ENCODE measurements at regions of chr1 and their contacts with region 1.

Region 1: DNA sequence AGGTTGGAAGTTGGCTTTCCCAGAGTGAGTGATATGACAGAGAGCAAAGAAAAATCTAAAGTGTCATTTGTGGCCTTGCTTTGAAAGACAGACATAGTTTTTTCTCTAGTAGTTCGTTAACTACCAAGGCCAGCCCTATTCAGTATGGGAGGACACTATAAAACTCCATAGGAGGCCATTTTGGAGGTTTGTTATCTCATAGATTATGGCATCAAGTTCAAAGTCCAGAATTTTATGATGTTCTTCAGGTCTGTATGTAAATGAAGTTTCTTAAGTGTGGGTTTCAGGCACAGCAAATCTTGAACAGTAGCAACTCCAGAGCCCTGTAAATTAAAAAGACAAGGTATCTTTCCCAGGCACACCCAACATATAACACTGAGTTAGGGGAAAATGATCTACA is 437.1 kb downstream of the PLPP3 start:
- DNase-seq: no peak
- ATAC-seq: no peak
- H3K4me3 ChIP-seq: no peak overlapping the region
- H3K27ac ChIP-seq: no peak overlapping the region
- H3K4me1 ChIP-seq: no peaks in the 10 kb centered on the region
- H3K27me3 ChIP-seq: no peaks in the 10 kb centered on the region
- CTCF ChIP-seq: no peak
- EP300 ChIP-seq: no peak
- POLR2A ChIP-seq: no peak
- RAD21 ChIP-seq: no peak

Region 2: DNA sequence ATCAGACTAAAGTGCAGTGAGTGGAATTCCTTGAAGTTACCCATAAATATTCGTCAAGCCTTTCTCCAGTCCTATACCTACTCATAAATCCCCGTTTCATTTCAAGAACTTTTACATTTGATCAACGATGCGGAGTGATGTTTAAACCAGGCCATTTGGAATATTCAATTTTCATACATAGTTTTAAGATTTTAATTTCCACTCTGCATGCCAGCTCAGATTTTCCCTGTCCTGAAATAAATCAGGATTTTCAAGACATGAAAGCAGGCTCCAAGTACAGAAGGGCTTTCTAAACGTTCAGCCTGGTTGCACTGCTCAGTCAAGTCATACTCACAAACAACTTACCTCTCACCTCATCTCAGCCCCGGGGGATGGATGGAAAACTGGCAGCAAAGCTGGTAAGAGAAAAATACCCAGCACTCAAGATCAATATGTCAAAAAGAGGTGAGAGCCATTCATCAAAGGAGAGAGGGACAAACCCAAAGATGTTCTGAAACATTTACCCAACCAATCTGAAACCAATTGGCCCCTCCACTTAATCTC is 18.5 kb after region 1 on chr1:
- CTCF ChIA-PET with region 1: no interaction called
- POLR2A ChIA-PET with region 1: no interaction called
- in situ Hi-C with region 1: no loop called
- intact Hi-C with region 1: loop called (anchors 1 kb)
- DNase-seq: no peak
- ATAC-seq: no peak
- H3K4me3 ChIP-seq: no peak overlapping the region
- H3K27ac ChIP-seq: no peak overlapping the region
- H3K4me1 ChIP-seq: no peaks in the 10 kb centered on the region
- H3K27me3 ChIP-seq: no peaks in the 10 kb centered on the region; a peak in 1 of 5 replicates
- CTCF ChIP-seq: no peak
- EP300 ChIP-seq: no peak
- POLR2A ChIP-seq: no peak
- RAD21 ChIP-seq: no peak